Colonic mucosa (tissue), 4 donors: ENCODE measurements at regions of chr18 and their contacts with region 1.

Region 1: DNA sequence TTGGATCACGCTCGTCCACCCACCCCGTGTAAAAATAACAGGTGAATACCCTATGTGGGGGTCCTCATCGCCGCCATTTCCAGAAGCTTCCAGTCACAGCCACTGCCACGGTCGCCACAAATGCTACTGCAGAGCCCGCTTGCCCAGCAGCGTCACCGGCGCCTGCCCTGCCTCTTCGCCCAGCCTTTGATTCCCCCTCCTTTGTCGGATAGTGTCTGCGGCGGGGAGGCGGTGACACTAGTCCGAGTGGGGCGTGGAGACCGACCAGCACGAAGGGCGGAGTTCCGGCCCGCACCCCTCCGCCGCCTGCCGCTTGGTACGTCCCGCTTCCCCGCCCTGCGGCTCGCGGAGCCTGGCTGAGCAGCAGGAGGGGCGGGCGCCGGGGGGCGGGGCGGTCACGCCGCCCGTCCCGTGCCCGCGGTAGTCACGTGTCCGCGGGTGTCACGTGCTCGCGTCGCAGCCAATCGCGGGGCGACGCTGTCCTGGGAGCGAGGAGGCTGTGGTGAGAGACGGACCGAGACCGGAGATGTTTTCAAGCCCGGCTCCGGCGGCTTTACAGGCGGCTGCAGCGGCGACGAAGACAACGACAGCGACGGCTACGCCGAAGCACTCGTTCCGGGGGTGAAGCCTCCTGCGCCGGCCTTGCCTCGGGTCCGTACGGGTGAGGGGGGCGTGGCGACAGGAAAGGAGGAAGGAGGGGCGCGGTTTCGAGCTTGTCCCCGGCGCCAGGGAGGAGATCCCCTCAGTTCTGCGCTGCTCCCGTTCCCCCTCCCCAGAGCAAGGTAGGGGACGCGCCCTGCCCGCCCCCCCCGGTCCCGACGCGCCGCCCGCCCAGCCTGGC is at the start of gene ANKRD12:
- DNase-seq: peak; percentile 97
- H3K4me3 ChIP-seq: peak within 1 kb of the TSS; percentile 65
- H3K27ac ChIP-seq: peak within 1 kb of the TSS; percentile 98
- H3K4me1 ChIP-seq: peaks cover 5% of the 10 kb centered on the region
- H3K27me3 ChIP-seq: no peaks in the 10 kb centered on the region
- CTCF ChIP-seq: no peak
- total RNA-seq, gene ANKRD12: 27.9 to 55.7 TPM

Region 2: GRCh38 chr18:9102508-9103375 is 33.8 kb before region 1 on chr18 and contains the start of gene NDUFV2:
- intact Hi-C with region 1: loop called (anchors 5 kb)
- DNase-seq: peak; percentile 98
- H3K4me3 ChIP-seq: peak within 1 kb of the TSS; percentile 54
- H3K27ac ChIP-seq: peak within 1 kb of the TSS; percentile 94
- H3K4me1 ChIP-seq: peaks cover 15% of the 10 kb centered on the region
- H3K27me3 ChIP-seq: no peaks in the 10 kb centered on the region
- CTCF ChIP-seq: no peak
- total RNA-seq, gene NDUFV2: 175 to 203 TPM

Region 3: GRCh38 chr18:9290156-9290555 is 153.6 kb after region 1 on chr18:
- intact Hi-C with region 1: no loop called
- DNase-seq: no peak
- H3K4me3 ChIP-seq: no peak overlapping the region
- H3K27ac ChIP-seq: no peak overlapping the region
- H3K4me1 ChIP-seq: no peaks in the 10 kb centered on the region
- H3K27me3 ChIP-seq: no peaks in the 10 kb centered on the region
- CTCF ChIP-seq: no peak

Region 4: GRCh38 chr18:9535382-9535991 is 399.0 kb after region 1 on chr18:
- intact Hi-C with region 1: no loop called
- DNase-seq: no peak
- H3K4me3 ChIP-seq: no peak overlapping the region
- H3K27ac ChIP-seq: no peak overlapping the region
- H3K4me1 ChIP-seq: no peaks in the 10 kb centered on the region
- H3K27me3 ChIP-seq: no peaks in the 10 kb centered on the region
- CTCF ChIP-seq: no peak